PC-3 (cell line): ENCODE measurements at regions of chr12 and their contacts with region 1.

Region 1: DNA sequence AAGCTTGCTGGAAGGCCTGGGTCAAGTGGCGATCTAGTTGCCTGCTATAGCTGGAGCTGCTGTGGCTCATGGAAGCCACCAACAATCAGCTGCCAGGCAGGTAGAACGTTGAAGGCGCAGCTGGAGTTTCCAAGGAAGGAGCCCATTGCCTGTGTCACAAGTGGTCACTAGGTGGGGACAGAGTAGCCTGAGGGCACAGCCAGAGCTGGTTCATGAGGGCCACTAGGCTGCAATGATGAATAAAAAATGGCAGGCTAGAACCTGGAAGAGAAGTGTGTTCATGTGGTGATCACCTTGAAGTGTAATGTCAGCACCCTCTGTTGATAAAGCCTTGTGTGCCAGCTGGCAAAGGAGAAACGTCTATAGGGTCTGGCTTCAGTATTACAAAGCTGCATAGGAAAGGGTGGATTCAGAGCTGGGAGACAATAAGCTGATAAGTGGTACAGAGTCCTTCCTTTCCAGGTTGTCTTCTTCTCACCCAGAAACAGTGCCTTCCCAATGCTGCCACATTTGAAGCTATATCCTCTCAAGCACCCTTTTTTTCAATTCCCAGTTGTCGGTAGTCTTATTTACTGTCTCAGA is 165.8 kb downstream of the EMP1 start:
- DNase-seq: peak; percentile 77
- ATAC-seq: peak; percentile 92
- H3K4me3 ChIP-seq: no peak overlapping the region
- H3K27ac ChIP-seq: no peak overlapping the region
- H3K4me1 ChIP-seq: peaks cover 3% of the 10 kb centered on the region; the same call in 1 of the 2 replicates
- H3K27me3 ChIP-seq: peaks cover 5% of the 10 kb centered on the region; the same call in 1 of the 2 replicates
- CTCF ChIP-seq: peak; percentile 84

Region 2: GRCh38 chr12:13278249-13278787 is 84.0 kb before region 1 on chr12:
- CTCF ChIA-PET with region 1: no interaction called
- POLR2A ChIA-PET with region 1: no interaction called
- intact Hi-C with region 1: loop called (anchors 5 kb)
- DNase-seq: peak; percentile 69
- ATAC-seq: peak; percentile 93
- H3K4me3 ChIP-seq: no peak overlapping the region
- H3K27ac ChIP-seq: no peak overlapping the region
- H3K4me1 ChIP-seq: no peaks in the 10 kb centered on the region
- H3K27me3 ChIP-seq: peaks cover 60% of the 10 kb centered on the region
- CTCF ChIP-seq: peak; percentile 90

Region 3: GRCh38 chr12:13404631-13405473 is 42.5 kb after region 1 on chr12:
- CTCF ChIA-PET with region 1: no interaction called
- POLR2A ChIA-PET with region 1: no interaction called
- intact Hi-C with region 1: loop called (anchors 5 kb)
- DNase-seq: no peak
- ATAC-seq: no peak
- H3K4me3 ChIP-seq: no peak overlapping the region
- H3K27ac ChIP-seq: no peak overlapping the region
- H3K4me1 ChIP-seq: no peaks in the 10 kb centered on the region
- H3K27me3 ChIP-seq: no peaks in the 10 kb centered on the region
- CTCF ChIP-seq: no peak

Region 4: DNA sequence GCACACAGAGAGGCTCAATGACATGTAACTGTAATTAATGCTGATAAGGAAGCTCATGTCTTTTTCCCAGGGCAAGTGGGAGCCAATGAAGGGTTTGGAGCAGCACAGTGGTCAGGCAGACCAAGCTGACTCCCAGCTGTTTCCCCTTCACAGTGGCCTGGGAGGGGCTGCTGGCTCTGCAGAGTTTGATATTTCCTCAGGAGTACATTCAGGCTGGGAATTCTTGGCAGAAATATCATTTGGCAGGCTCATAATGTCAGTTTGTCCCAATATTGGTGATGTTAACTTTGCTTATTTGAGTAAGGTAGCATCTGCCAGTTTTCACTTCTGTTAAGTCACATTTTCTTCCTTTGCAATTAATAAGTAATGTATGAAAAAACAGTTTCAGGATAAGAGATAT is 81.1 kb after region 1 on chr12:
- CTCF ChIA-PET with region 1: no interaction called
- POLR2A ChIA-PET with region 1: no interaction called
- intact Hi-C with region 1: loop called (anchors 5 kb)
- DNase-seq: no peak
- ATAC-seq: no peak
- H3K4me3 ChIP-seq: no peak overlapping the region
- H3K27ac ChIP-seq: no peak overlapping the region; the same call in 1 of the 2 replicates
- H3K4me1 ChIP-seq: peaks cover 12% of the 10 kb centered on the region; the same call in 1 of the 2 replicates
- H3K27me3 ChIP-seq: no peaks in the 10 kb centered on the region
- CTCF ChIP-seq: no peak

Region 5: GRCh38 chr12:13534645-13535398 is 172.5 kb after region 1 on chr12:
- CTCF ChIA-PET with region 1: interaction called, 5 read pairs
- POLR2A ChIA-PET with region 1: no interaction called
- intact Hi-C with region 1: loop called (anchors 5 kb)
- DNase-seq: peak; percentile 75
- ATAC-seq: peak; percentile 35; the same call in 1 of the 2 replicates
- H3K4me3 ChIP-seq: 0 out of 2 replicates have a peak overlapping the region, but pooled peaks have one; percentile 24
- H3K27ac ChIP-seq: no peak overlapping the region
- H3K4me1 ChIP-seq: no peaks in the 10 kb centered on the region
- H3K27me3 ChIP-seq: peaks cover 20% of the 10 kb centered on the region; the same call in 1 of the 2 replicates
- CTCF ChIP-seq: peak; percentile 86

Region 6: GRCh38 chr12:13661005-13661887 is 298.9 kb after region 1 on chr12:
- CTCF ChIA-PET with region 1: no interaction called
- POLR2A ChIA-PET with region 1: no interaction called
- intact Hi-C with region 1: loop called (anchors 1 kb)
- DNase-seq: peak; percentile 53
- ATAC-seq: peak; percentile 49; the same call in 1 of the 2 replicates
- H3K4me3 ChIP-seq: no peak overlapping the region
- H3K27ac ChIP-seq: no peak overlapping the region
- H3K4me1 ChIP-seq: no peaks in the 10 kb centered on the region
- H3K27me3 ChIP-seq: peaks cover 35% of the 10 kb centered on the region
- CTCF ChIP-seq: peak; percentile 64